Activated CD8-positive, alpha-beta T cell treated with anti-CD3 and anti-CD28 coated beads for 36 hours (primary cell): ENCODE measurements at regions of chr10 and their contacts with region 1.

Region 1: DNA sequence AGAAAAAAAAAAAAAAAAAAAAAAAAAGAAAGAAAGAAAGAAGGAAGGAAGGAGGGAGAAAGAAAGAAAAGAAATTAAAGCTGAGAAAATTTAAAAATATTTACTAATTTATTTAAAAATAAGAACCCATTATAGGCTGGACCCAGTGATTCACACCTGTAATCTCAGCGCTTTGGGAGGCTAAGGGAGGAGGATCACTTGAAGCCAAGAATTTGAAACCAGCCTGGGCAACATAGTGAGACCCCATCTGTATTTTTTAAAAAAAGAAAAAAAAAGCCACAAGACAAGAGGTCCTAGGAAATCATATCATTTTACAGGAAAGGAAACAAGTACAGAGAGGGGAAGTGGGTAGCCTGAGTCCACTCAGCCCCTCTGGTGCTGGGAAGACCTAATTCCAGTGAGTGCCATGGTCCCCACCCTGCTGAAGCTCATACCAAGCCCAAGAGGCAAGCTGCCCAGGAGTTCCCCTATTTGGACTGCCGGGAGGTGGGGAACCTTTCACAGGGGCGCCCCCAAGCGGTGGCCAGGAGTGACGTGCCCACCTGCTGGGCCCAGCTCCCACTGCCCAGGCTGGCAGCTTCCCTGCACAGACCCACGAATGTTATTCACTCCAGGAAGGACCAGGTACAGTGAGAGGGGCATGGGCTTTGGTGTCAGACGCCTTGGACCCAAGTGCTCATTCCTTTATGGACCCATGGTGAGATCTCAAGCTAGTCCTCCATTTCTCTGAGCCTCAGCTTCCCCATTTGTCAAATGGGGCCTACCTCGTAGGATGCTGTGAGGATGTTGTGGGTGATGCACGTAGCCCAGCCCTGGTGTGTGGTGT is 133.6 kb downstream of the ZMIZ1 start:
- DNase-seq: peak; percentile 63
- ATAC-seq: peak; percentile 70
- H3K4me3 Mint-ChIP-seq: no peak overlapping the region
- H3K27ac Mint-ChIP-seq: no peak overlapping the region
- H3K4me1 Mint-ChIP-seq: no peaks in the 10 kb centered on the region
- H3K27me3 Mint-ChIP-seq: no peaks in the 10 kb centered on the region
- CTCF ChIP-seq: peak; percentile 51

Region 2: DNA sequence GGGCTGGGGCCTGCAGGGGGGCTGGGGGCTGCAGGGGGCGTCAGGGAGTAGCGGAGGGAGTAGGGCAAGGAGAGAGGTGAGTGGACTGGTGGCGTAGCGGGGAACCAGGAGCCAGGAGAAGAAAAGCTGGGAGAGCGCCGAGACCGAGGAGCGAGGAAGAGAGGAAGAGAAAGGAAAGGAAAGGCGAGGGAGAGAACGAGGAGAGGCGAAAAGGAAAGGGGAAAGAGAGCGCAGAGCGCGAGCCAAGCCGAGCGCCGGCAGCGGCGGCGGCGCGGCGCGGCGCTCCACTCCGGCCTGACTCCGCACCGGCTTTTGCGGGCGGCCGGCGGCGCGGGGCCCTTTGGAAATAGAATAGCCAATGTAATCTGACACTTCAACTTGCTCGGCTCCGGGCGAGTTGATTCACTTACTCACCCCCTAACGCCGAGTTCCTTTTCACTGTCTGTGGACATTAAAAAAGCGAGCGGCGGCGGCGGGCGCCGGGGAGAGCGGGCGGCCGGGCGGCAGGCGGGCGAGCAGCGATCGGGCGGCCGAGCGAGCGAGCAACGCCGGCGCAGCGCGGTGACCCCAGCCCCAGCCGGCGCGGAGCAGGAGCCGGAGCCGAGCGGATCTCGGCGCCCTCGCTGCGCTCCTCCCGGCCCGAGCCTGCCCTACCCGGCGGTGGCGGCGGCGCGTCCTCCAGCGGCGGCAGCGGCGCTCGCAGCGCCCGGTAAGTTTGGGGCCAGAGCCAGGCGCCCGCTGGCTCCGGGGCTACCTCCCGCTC is 133.7 kb before region 1 on chr10 and contains the start of gene ZMIZ1:
- CTCF ChIA-PET with region 1: no interaction called
- POLR2A ChIA-PET with region 1: no interaction called
- intact Hi-C with region 1: loop called (anchors 5 kb)
- DNase-seq: peak; percentile 87
- ATAC-seq: peak; percentile 65
- H3K4me3 Mint-ChIP-seq: peak within 1 kb of the TSS; percentile 89
- H3K27ac Mint-ChIP-seq: peak within 1 kb of the TSS; percentile 86
- H3K4me1 Mint-ChIP-seq: peaks cover 33% of the 10 kb centered on the region
- H3K27me3 Mint-ChIP-seq: no peaks in the 10 kb centered on the region
- CTCF ChIP-seq: no peak
- total RNA-seq, gene ZMIZ1: 46.5 to 52.2 TPM

Region 3: GRCh38 chr10:79101560-79102497 is 100.6 kb before region 1 on chr10:
- CTCF ChIA-PET with region 1: no interaction called
- POLR2A ChIA-PET with region 1: no interaction called
- intact Hi-C with region 1: no loop called
- DNase-seq: no peak
- ATAC-seq: no peak
- H3K4me3 Mint-ChIP-seq: no peak overlapping the region
- H3K27ac Mint-ChIP-seq: no peak overlapping the region
- H3K4me1 Mint-ChIP-seq: peaks cover 42% of the 10 kb centered on the region
- H3K27me3 Mint-ChIP-seq: no peaks in the 10 kb centered on the region
- CTCF ChIP-seq: no peak

Region 4: DNA sequence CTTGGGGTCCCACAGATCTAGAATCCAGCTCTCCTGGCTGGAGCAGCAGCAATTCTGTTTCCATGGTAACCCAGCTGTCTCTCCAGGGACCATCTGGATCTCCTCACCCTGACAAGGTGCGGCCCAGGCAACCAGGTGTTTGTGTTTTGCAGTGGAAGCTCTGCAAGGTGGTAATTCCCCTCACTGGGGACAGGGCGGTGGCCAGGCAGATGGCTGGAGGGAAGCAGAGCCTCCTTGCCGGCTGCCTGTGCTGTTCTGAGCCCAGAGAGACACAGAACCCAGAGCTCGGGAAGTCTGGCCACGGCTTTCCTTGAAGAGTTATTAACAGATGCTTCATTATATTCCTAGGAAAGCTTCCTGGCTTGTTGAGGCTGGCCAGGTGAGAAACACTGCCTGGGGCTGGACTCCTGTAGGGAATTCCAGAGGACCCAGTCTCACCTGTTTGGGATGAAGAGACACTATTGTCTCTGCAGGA is 26.7 kb after region 1 on chr10:
- CTCF ChIA-PET with region 1: no interaction called
- POLR2A ChIA-PET with region 1: no interaction called
- intact Hi-C with region 1: no loop called
- DNase-seq: no peak
- ATAC-seq: no peak
- H3K4me3 Mint-ChIP-seq: no peak overlapping the region
- H3K27ac Mint-ChIP-seq: no peak overlapping the region
- H3K4me1 Mint-ChIP-seq: no peaks in the 10 kb centered on the region
- H3K27me3 Mint-ChIP-seq: no peaks in the 10 kb centered on the region
- CTCF ChIP-seq: no peak

Region 5: DNA sequence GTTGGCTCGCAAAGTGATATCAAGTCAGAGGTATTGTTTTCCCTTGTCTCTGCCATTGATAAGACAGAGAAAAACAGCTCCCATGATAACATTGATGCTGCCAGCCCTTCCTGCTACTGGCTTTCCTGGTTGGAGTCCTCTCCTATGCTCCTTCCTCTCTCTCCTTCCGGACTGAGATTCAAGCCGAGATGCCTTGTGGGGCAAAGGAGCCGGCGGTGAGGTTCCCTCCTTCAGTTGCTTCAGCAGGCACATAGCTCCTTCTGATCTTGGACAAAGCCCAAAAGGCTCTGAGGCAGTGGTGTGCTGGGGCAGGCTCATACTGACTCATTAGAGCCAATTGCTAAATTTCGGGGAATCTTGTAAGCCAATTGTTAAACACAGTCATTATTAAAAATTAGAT is 251.9 kb after region 1 on chr10:
- CTCF ChIA-PET with region 1: no interaction called
- POLR2A ChIA-PET with region 1: no interaction called
- intact Hi-C with region 1: no loop called
- DNase-seq: no peak
- ATAC-seq: no peak
- H3K4me3 Mint-ChIP-seq: no peak overlapping the region
- H3K27ac Mint-ChIP-seq: no peak overlapping the region
- H3K4me1 Mint-ChIP-seq: no peaks in the 10 kb centered on the region
- H3K27me3 Mint-ChIP-seq: peaks cover 7% of the 10 kb centered on the region
- CTCF ChIP-seq: no peak

Region 6: DNA sequence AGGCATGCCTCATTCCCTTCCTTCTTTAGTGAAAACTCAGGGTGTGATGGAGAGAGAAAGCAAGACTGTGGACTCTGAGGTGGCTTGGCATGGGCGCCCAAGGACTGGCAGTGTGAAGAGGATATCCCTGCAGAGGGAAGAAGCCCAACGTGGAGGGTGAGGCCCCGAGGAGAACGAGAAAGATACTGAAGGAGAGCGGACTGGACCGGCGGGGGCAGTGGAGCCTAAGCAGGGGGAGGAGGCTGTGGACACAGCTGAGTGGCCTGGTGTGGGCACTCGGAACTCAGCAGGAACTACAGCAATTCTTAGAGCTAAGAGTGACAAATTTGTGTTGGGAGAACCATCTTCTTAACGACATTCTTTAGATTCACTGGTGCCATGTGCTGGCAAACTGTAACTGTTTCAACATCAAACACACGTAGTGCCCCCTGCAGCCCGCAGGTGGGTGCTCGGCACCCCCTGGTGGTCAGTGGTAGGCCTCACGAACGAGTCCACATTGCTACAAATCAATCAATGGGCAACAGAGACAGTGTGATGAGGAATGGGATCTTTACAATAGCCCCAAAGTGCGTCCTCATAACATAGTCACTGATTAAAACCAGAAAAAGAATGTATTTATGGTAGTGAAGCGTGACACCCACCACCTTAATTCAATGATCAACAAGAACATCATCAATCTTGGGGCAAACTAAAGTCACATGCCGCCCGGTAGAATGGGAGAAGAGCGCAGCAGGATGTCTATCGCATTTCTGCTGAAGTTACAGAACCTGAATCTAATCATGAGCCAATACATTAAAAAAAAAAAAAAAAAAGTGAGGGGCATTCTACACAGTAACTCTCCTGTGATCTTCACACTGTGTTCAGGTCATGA is 406.3 kb after region 1 on chr10:
- CTCF ChIA-PET with region 1: no interaction called
- POLR2A ChIA-PET with region 1: no interaction called
- intact Hi-C with region 1: no loop called
- DNase-seq: peak; percentile 68
- ATAC-seq: peak; percentile 73
- H3K4me3 Mint-ChIP-seq: no peak overlapping the region
- H3K27ac Mint-ChIP-seq: no peak overlapping the region
- H3K4me1 Mint-ChIP-seq: no peaks in the 10 kb centered on the region
- H3K27me3 Mint-ChIP-seq: no peaks in the 10 kb centered on the region
- CTCF ChIP-seq: peak; percentile 76